Activated CD4-positive, alpha-beta T cell treated with anti-CD3 and anti-CD28 coated beads for 36 hours (primary cell): ENCODE measurements at regions of chr16 and their contacts with region 1.

Region 1: DNA sequence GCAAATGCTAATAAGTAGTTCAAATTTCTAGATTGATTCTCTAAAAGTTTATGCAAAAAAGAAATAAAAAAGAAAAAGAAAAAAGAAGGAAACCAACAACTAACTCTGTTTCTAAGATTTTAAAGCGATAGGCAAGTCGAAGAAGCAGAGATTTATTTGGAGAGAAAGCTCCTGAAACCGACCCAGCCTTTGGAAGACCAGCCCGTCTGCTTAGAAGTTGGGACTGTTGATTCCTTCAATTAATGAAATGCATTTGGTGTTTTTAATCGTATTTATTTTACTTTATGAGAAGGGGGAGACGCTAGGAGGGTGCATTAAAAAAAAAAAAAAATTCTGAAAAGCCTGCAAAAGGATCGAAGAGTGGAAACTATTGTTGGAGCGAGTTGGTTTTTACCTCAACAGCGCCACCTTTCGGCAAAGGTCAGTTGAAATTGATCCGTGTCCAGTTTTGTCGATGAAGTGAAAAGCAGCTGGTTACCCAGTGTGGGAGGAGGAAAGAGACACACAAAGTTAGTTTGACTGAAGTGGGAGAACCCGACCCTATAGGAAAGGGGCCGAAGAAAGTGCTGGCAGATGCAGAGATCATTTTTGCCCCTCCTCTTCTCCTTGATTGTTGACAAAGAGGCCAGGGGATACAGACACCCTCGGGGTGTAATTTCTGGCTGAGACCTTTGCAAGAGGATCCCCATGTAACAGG is 1.5 kb upstream of the MAF start:
- DNase-seq: peak; percentile 92
- ATAC-seq: peak; percentile 14
- H3K4me3 Mint-ChIP-seq: peak overlapping the region; percentile 84
- H3K27ac Mint-ChIP-seq: peak overlapping the region; percentile 92
- H3K4me1 Mint-ChIP-seq: peaks cover 32% of the 10 kb centered on the region
- H3K27me3 Mint-ChIP-seq: peaks cover 24% of the 10 kb centered on the region

Region 2: DNA sequence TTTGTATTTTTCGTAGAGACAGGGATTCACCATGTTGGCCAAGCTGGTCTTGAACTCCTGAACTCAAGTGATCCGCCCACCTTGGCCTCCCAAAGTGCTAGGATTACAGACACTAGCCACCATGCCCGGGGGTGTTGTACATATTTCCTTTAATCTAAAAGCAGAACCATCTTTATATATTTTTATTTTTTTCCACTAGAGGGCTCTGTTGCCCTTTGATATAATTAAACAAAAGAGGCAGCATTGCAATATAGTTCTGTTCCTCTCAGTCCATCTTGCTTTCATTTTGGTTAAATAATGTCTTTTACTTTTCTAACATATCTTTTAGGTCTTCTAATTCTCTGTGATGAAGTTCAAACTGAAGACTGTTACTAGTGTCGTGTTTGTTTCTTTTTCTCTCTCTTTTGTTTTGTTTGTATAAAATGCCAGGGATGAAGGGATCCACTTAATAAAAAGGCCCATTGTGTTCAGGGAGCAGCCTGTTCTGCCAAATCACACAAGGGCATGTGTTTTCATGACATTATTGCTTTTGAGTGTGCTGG is 1479.2 kb before region 1 on chr16:
- CTCF ChIA-PET with region 1: interaction called, 4 read pairs
- POLR2A ChIA-PET with region 1: no interaction called
- intact Hi-C with region 1: loop called (anchors 5 to 10 kb)
- DNase-seq: peak; percentile 33
- ATAC-seq: peak; percentile 65
- H3K4me3 Mint-ChIP-seq: no peak overlapping the region
- H3K27ac Mint-ChIP-seq: no peak overlapping the region
- H3K4me1 Mint-ChIP-seq: peaks cover 5% of the 10 kb centered on the region
- H3K27me3 Mint-ChIP-seq: no peaks in the 10 kb centered on the region

Region 3: DNA sequence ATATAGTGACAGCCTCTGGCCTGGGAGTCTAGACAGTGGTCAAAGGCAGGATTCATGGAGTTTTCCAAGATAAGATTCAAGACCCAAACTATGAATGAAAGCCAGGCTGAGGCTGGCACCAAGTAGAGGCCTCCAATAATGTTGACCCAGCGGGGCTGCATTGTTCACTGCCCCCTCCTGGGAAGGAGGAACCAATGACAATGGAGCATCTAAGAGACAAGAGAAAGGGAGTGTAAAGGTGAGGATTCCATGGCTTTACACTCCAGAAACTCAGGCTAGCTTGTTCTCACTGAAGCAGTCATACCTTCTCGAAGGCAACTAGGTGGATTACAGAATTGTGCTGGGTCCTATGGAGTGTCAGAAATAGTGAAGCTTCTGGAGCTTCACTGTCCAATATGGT is 1122.4 kb before region 1 on chr16:
- CTCF ChIA-PET with region 1: no interaction called
- POLR2A ChIA-PET with region 1: no interaction called
- intact Hi-C with region 1: no loop called
- DNase-seq: no peak
- ATAC-seq: no peak
- H3K4me3 Mint-ChIP-seq: no peak overlapping the region
- H3K27ac Mint-ChIP-seq: no peak overlapping the region
- H3K4me1 Mint-ChIP-seq: no peaks in the 10 kb centered on the region
- H3K27me3 Mint-ChIP-seq: no peaks in the 10 kb centered on the region

Region 4: DNA sequence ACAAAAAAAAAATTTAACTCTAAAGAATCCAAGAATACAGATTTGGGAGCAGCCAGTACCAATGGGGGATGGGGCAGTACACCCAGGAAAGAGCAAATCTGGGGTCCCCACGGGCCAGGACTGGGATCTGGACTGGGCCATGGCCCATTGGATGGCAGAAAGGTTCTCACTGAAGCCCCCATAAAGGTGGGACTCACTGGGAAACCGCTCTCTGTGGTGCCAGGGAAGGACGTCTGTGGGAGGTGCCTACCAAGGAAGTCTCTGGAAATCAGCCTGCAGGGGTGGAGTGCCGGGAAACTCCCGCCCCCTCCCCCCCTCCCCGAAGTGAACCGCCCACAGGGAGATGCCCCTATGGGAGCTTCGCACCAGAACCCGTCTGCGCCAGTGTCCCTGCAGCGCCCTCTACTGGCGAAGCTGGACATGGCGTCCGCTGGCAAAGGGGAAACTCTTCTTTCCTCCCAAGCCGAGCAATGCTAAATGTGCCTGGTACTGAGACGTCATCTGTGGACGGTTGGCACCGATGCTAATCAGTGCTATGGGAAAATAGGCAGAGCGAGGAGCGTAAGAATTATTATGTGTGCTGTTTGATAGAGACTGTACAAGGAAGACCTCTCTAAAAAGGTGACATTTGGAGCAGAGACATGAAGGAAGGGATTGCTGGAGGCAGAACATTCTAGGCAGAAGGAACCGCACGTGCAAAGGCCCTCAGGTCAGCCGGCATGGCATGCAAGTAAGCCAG is 831.6 kb before region 1 on chr16:
- CTCF ChIA-PET with region 1: no interaction called
- POLR2A ChIA-PET with region 1: interaction called, 15 read pairs
- intact Hi-C with region 1: loop called (anchors 2 kb)
- DNase-seq: peak; percentile 90
- ATAC-seq: peak; percentile 23
- H3K4me3 Mint-ChIP-seq: peak overlapping the region; percentile 20
- H3K27ac Mint-ChIP-seq: peak overlapping the region; percentile 79
- H3K4me1 Mint-ChIP-seq: peaks cover 57% of the 10 kb centered on the region
- H3K27me3 Mint-ChIP-seq: peaks cover 6% of the 10 kb centered on the region

Region 5: DNA sequence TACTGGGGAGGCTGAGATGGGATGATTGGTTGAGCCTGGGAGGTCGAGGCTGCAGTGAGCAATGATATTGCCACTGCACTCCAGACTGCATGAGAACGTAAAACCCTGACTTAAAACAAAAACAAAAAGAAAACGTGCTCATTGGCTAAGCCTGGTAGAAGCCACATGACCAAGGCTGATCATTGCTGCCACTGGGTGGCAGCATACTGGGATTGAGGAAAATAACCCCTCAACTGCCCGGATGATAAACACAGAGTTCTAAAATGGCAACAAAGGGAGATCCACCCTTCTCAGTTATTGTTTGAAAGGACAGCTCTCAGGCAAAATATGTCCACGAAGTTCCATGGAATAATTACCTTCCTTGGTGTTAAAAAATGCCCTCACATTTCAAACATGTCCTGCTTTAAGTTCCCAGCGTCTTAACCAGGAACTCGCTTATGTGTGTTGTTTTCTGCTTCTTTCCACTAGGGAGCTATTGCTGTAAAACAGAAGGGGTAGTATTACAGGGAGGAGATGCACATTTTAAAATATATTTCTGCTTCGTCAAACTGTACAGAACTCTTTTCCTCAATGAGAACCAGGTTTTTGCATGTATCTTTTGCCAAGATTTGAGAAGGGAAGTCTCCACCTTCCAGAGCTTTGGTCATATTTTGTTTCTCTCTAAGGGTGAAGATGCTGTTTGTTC is 676.9 kb before region 1 on chr16:
- CTCF ChIA-PET with region 1: interaction called, 3 read pairs
- POLR2A ChIA-PET with region 1: no interaction called
- intact Hi-C with region 1: loop called in 1 of 2 experiments (anchors 10 kb)
- DNase-seq: peak; percentile 58
- ATAC-seq: peak; percentile 68
- H3K4me3 Mint-ChIP-seq: no peak overlapping the region
- H3K27ac Mint-ChIP-seq: no peak overlapping the region
- H3K4me1 Mint-ChIP-seq: peaks cover 14% of the 10 kb centered on the region
- H3K27me3 Mint-ChIP-seq: no peaks in the 10 kb centered on the region

Region 6: GRCh38 chr16:79269211-79269863 is 332.7 kb before region 1 on chr16:
- CTCF ChIA-PET with region 1: no interaction called
- POLR2A ChIA-PET with region 1: interaction called, 4 read pairs
- intact Hi-C with region 1: loop called (anchors 2 to 5 kb)
- DNase-seq: peak; percentile 86
- ATAC-seq: peak; percentile 70
- H3K4me3 Mint-ChIP-seq: peak overlapping the region; percentile 19
- H3K27ac Mint-ChIP-seq: peak overlapping the region; percentile 86
- H3K4me1 Mint-ChIP-seq: peaks cover 89% of the 10 kb centered on the region
- H3K27me3 Mint-ChIP-seq: peaks cover 26% of the 10 kb centered on the region

Region 7: DNA sequence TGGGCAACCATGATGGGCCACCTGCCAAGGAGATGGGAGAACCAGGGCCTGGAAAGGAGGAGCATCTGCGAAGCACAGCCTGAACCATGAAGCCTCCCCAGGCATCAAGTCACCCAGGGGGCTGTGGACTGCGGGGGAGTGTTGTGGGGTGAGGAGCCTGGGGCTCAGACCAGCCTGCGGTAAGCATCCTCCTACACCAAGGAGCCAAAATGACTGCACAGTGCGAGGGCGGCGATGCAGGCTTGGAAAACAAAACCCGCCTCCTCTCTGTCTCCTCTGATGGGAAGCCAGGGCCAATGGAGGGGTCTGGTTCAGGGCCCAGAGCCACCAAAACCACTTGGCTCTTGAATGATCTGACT is 16.6 kb after region 1 on chr16:
- CTCF ChIA-PET with region 1: interaction called, 16 read pairs
- POLR2A ChIA-PET with region 1: no interaction called
- intact Hi-C with region 1: no loop called
- DNase-seq: peak; percentile 65
- ATAC-seq: peak; percentile 74
- H3K4me3 Mint-ChIP-seq: no peak overlapping the region
- H3K27ac Mint-ChIP-seq: peak overlapping the region; percentile 44
- H3K4me1 Mint-ChIP-seq: peaks cover 25% of the 10 kb centered on the region
- H3K27me3 Mint-ChIP-seq: peaks cover 13% of the 10 kb centered on the region

Region 8: GRCh38 chr16:80084685-80085084 is 482.6 kb after region 1 on chr16:
- CTCF ChIA-PET with region 1: no interaction called
- POLR2A ChIA-PET with region 1: no interaction called
- intact Hi-C with region 1: loop called in 1 of 2 experiments (anchors 10 kb)
- DNase-seq: peak; percentile 30
- ATAC-seq: peak; percentile 53
- H3K4me3 Mint-ChIP-seq: no peak overlapping the region
- H3K27ac Mint-ChIP-seq: no peak overlapping the region
- H3K4me1 Mint-ChIP-seq: no peaks in the 10 kb centered on the region
- H3K27me3 Mint-ChIP-seq: peaks cover 3% of the 10 kb centered on the region